PC-9 (cell line): ENCODE measurements at regions of chr3 and their contacts with region 1.

Region 1: DNA sequence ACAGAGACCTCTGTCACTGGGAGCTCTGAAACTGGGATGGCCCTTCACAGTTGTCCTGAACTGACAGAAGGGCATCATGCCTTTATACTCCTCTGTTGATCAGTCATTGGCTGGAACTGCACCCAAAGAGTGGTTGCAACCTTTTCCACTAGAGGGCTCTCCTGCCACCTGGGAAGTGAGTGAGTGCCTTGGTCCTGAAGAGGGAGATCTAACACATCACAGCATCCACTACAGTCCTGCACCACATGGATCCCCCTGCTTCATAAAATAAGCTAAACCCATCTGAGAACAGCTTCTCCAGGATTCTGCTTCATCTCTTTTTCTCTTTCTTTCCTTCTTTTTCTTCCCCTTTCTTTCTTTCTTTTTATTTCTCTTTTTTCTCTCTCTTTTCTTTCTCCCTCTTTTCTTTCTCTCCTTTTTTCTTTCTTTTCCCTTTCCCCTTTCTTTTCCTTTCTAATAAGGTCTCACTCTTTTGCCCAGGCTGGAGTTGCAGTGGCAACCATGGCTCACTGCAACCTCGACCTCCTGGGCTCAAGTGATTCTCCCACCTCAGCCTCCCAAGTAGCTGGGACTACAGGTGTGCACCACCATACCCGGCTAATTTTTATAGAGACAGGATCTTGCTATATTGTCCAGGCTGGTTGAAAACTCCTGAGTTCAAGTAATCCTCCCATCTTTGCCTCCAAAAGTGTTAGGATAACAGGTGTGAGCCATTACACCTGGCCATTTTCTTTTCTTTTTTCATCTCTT is 42.8 kb upstream of the RAF1 start:
- DNase-seq: peak; percentile 63 to 71
- H3K4me3 ChIP-seq: no peak overlapping the region
- H3K27ac ChIP-seq: no peak overlapping the region
- H3K4me1 ChIP-seq: peaks cover 17% of the 10 kb centered on the region
- H3K27me3 ChIP-seq: no peaks in the 10 kb centered on the region
- CTCF ChIP-seq: peak; percentile 85

Region 2: GRCh38 chr3:12601072-12601471 is 105.6 kb before region 1 on chr3:
- CTCF ChIA-PET with region 1: no interaction called
- POLR2A ChIA-PET with region 1: no interaction called
- intact Hi-C with region 1: loop called (anchors 10 kb)
- DNase-seq: no peak
- H3K4me3 ChIP-seq: no peak overlapping the region
- H3K27ac ChIP-seq: no peak overlapping the region
- H3K4me1 ChIP-seq: no peaks in the 10 kb centered on the region
- H3K27me3 ChIP-seq: no peaks in the 10 kb centered on the region
- CTCF ChIP-seq: no peak

Region 3: DNA sequence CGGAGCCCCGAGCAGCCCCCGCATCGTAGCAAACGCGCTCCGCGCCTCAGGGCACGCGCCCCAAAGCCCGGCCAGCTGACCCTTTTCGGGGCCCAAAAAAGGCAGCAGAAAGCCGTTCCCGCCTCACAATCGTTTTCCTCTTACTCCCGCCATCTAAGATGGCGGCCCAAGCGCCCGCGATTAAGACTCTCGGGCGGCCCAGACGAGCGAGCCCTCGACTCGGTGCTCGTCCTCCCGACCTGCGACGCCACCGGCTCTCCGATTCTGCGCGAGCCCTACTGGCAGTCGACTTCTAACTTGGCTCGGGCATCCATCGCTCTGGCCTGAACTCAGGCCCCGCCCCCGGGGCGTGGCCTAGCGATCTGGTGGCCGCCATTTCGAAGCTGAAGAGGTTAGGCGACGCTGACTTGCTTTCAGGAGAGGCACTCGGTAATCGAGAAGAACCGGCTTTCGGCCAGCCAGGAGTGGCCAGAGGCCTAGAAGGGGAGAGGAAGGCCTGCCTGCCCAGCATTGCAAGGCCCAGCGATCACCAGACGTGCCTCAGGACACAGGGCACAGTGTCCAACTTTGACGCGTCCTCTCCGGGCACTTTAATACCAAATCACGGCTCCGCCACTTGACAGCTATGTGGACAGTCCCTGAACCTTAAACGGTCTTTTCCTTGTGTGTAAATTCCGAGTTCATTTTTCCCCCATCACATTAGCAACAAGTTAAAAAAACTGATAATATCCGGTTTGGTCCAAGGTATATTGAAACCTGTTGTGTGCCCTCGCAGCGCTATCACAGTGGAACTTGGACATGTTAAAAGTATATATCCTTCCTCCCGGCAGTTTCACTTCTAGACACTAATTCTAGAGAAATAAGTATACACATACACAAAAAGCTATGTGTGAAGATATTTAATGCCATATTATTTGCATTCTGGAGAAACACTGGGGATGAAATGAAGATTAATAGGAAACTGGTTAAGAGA is 42.5 kb before region 1 on chr3 and contains the start of gene RAF1:
- CTCF ChIA-PET with region 1: no interaction called
- POLR2A ChIA-PET with region 1: no interaction called
- intact Hi-C with region 1: loop called (anchors 5 kb)
- DNase-seq: peak; percentile 94 to 98
- H3K4me3 ChIP-seq: peak within 1 kb of the TSS; percentile 84
- H3K27ac ChIP-seq: peak within 1 kb of the TSS; percentile 89
- H3K4me1 ChIP-seq: peaks cover 38% of the 10 kb centered on the region
- H3K27me3 ChIP-seq: no peaks in the 10 kb centered on the region
- CTCF ChIP-seq: no peak
- total RNA-seq, gene RAF1: 65.3 and 72.4 TPM in 2 replicates

Region 4: GRCh38 chr3:12681943-12682390 is 24.7 kb before region 1 on chr3:
- CTCF ChIA-PET with region 1: no interaction called
- POLR2A ChIA-PET with region 1: no interaction called
- intact Hi-C with region 1: no loop called
- DNase-seq: peak in 1 of 2 experiments; percentile 57
- H3K4me3 ChIP-seq: no peak overlapping the region
- H3K27ac ChIP-seq: no peak overlapping the region
- H3K4me1 ChIP-seq: peaks cover 17% of the 10 kb centered on the region
- H3K27me3 ChIP-seq: no peaks in the 10 kb centered on the region
- CTCF ChIP-seq: no peak

Region 5: DNA sequence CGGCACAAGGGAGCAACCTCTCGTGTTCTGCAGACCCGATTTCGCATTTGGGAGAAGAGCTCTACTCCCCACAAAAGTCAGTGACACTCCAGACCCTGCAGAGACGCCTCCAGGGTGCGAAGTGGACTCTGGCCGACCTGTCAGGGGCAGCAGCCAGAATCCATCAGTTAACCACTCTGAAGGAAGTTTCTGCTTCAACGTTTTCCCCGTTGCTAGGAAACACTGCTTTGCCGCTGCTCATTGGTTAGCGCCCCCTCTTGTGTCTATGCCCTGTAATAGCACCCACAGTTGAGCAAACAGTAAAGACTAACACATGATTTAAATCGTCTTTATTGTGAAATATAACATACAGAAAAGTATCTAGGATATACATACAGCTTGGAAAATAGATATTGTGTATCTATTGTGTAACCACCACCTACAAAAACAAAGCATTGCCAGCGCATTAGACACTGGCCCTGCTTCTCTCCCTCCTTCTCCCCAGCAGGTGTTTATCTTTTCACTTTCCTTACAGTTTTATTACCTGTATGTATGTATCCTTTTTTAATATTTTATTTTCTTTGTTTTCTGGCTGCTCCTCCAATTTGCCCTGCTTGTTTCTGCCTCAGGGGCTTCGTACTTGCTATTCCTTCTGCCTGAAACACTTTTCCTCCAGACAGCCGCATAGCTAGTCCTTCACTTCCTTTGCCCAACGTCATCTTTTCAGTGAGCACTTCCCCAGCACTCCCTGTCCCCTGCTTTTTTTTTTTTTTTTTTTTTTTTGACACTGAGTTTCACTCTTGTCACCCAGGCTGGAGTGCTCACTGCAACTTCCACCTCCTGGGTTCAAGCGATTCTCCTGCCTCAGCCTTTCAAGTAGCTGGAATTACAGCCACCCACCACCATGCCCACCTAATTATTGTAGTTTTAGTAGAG is 13.6 kb after region 1 on chr3:
- CTCF ChIA-PET with region 1: no interaction called
- POLR2A ChIA-PET with region 1: no interaction called
- intact Hi-C with region 1: no loop called
- DNase-seq: peak; percentile 69 to 80
- H3K4me3 ChIP-seq: no peak overlapping the region
- H3K27ac ChIP-seq: no peak overlapping the region
- H3K4me1 ChIP-seq: peaks cover 3% of the 10 kb centered on the region; the same call in 1 of the 2 replicates
- H3K27me3 ChIP-seq: no peaks in the 10 kb centered on the region
- CTCF ChIP-seq: peak; percentile 94

Region 6: DNA sequence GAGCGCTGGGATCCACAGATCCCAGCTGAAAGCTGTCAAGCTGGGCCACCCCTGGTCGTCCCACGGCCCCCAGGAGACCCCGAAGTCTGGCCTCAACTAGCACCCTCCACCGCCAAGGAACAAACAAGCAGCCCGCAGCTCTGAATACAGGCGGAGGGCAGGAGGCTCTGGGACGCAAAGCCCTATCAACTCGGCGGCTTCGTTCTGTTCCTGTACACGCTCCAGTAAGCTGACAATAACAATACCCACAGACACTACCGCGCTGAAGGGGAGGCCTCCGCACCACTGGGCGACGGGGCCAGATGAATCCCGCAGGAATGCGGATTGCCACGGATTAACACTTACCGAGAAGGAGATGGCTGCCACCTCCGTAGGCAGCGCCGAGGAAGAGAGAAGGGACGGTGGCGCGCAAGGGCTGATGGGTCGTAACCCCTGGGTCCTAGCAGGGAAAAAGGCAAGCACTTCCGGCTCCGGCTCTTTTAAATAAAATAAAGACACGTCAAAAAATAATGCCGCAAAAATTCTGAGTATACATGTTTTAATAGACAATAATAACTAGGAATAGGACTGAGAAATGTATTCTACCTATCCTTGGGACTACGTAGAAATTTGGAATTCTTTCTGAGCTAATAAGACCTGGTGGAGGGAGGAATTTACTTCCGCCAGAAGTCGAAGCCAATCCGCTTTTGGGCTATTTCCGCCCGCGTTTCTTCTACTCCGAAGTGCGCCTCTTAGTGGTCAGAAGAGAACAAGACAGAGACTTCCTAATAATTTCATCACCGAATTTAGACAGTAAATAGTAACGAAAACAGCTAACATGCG is 134.7 kb after region 1 on chr3 and contains the start of gene RPL32:
- CTCF ChIA-PET with region 1: no interaction called
- POLR2A ChIA-PET with region 1: no interaction called
- intact Hi-C with region 1: loop called (anchors 1 kb)
- DNase-seq: peak; percentile 77 to 85
- H3K4me3 ChIP-seq: peak within 1 kb of the TSS; percentile 98
- H3K27ac ChIP-seq: peak within 1 kb of the TSS; percentile 93
- H3K4me1 ChIP-seq: peaks cover 33% of the 10 kb centered on the region
- H3K27me3 ChIP-seq: no peaks in the 10 kb centered on the region
- CTCF ChIP-seq: peak; percentile 89
- total RNA-seq, gene RPL32: 1,195 and 1,662 TPM in 2 replicates